Prostate gland (tissue), 2 donors: ENCODE measurements at regions of chr2 and their contacts with region 1.

Region 1: GRCh38 chr2:135741395-135742324 is at the start of gene UBXN4:
- DNase-seq: peak; percentile 98
- H3K4me3 ChIP-seq: peak within 1 kb of the TSS; percentile 85 to 86
- H3K27ac ChIP-seq: peak within 1 kb of the TSS; percentile 98 to 100
- H3K4me1 ChIP-seq: no peaks in the 10 kb centered on the region
- H3K27me3 ChIP-seq: no peaks in the 10 kb centered on the region
- CTCF ChIP-seq: peak in 1 of 4 experiments; percentile 33
- POLR2A ChIP-seq: peak; percentile 98
- total RNA-seq, gene UBXN4: 67.8 to 74.3 TPM

Region 2: GRCh38 chr2:134819334-134819733 is 922.3 kb before region 1 on chr2:
- intact Hi-C with region 1: no loop called
- DNase-seq: no peak
- H3K4me3 ChIP-seq: no peak overlapping the region
- H3K27ac ChIP-seq: no peak overlapping the region
- H3K4me1 ChIP-seq: no peaks in the 10 kb centered on the region
- H3K27me3 ChIP-seq: no peaks in the 10 kb centered on the region
- CTCF ChIP-seq: no peak
- POLR2A ChIP-seq: no peak

Region 3: GRCh38 chr2:134918526-134919340 is 822.9 kb before region 1 on chr2 and contains the start of gene CCNT2:
- intact Hi-C with region 1: loop called (anchors 2 kb)
- DNase-seq: peak; percentile 97
- H3K4me3 ChIP-seq: peak within 1 kb of the TSS; percentile 90 to 95
- H3K27ac ChIP-seq: peak within 1 kb of the TSS; percentile 97
- H3K4me1 ChIP-seq: peaks cover 12% of the 10 kb centered on the region
- H3K27me3 ChIP-seq: no peaks in the 10 kb centered on the region
- CTCF ChIP-seq: peak in 1 of 4 experiments; percentile 19
- POLR2A ChIP-seq: peak; percentile 55
- total RNA-seq, gene CCNT2: 24.1 to 34.8 TPM

Region 4: GRCh38 chr2:135876066-135876711 is 134.5 kb after region 1 on chr2 and contains the start of gene MCM6:
- intact Hi-C with region 1: loop called (anchors 10 kb)
- DNase-seq: peak; percentile 95
- H3K4me3 ChIP-seq: peak within 1 kb of the TSS; percentile 55 to 62
- H3K27ac ChIP-seq: peak within 1 kb of the TSS; percentile 68 to 80
- H3K4me1 ChIP-seq: no peaks in the 10 kb centered on the region
- H3K27me3 ChIP-seq: no peaks in the 10 kb centered on the region
- CTCF ChIP-seq: peak in 2 of 4 experiments; percentile 12 to 43
- POLR2A ChIP-seq: peak; percentile 65
- total RNA-seq, gene MCM6: 6.8 to 19.8 TPM